ENCODE measurements at regions of chr2 and their contacts with region 1.

Region 1: GRCh38 chr2:168336864-168337263 is 89.5 kb upstream of the STK39 start:
- DNase-seq: peak; percentile 77
- ATAC-seq: peak; percentile 98
- H3K4me3 Mint-ChIP-seq: no peak overlapping the region
- H3K27ac Mint-ChIP-seq: no peak overlapping the region
- H3K4me1 Mint-ChIP-seq: peaks cover 7% of the 10 kb centered on the region
- H3K27me3 Mint-ChIP-seq: peaks cover 2% of the 10 kb centered on the region

Region 2: DNA sequence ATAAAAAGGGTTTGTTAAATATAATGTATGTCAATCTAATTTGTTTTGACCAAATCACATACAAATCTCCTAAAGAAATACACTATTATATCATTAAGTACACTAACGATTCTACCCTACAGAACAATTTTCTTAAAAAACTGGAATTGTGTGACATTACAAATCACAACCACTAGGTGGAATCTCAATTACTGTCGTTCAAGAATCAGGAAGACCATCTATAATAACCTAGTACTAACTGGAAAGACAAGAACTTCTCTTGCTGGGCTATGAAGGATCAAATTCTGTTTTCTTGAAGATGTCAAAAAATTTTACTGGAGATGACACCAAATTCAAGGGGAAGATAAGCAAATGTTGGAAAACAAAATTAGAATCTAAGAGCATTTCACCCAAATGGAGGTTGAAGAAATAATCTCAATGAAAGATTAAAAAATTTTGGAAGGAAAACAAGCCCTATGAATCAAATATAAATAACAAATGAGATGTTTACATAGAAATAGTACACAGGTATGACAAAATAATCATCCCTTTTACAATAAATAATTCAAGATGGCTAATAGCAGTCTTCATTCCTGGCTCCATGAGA is 200.4 kb before region 1 on chr2:
- CTCF ChIA-PET with region 1: interaction called, 5 read pairs
- POLR2A ChIA-PET with region 1: no interaction called
- intact Hi-C with region 1: loop called (anchors 1 to 2 kb)
- DNase-seq: no peak
- ATAC-seq: peak; percentile 26
- H3K4me3 Mint-ChIP-seq: no peak overlapping the region
- H3K27ac Mint-ChIP-seq: no peak overlapping the region
- H3K4me1 Mint-ChIP-seq: peaks cover 20% of the 10 kb centered on the region
- H3K27me3 Mint-ChIP-seq: no peaks in the 10 kb centered on the region

Region 3: DNA sequence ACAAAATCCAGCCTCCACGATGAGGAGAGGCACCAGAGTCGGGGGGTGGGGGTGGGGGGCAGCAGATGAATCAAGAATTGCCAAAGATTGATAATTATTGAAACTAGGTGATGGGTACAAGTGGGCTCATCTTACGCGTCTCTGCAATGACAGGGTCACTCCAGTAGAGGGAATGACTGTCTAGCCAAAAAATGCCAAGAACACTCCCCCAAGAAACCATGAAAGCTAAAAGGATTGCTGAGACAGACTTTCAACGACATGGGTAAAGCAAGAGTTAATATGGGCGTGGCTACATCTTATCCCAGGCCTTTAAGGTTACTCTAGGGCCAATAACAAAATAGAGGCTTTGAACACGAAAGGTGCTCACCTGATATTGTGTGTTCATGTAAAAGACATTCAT is 176.0 kb before region 1 on chr2:
- CTCF ChIA-PET with region 1: interaction called, 4 read pairs
- POLR2A ChIA-PET with region 1: interaction called, 3 read pairs
- intact Hi-C with region 1: loop called (anchors 1 to 10 kb)
- DNase-seq: no peak
- ATAC-seq: peak; percentile 38
- H3K4me3 Mint-ChIP-seq: no peak overlapping the region
- H3K27ac Mint-ChIP-seq: no peak overlapping the region
- H3K4me1 Mint-ChIP-seq: peaks cover 31% of the 10 kb centered on the region
- H3K27me3 Mint-ChIP-seq: no peaks in the 10 kb centered on the region

Region 4: DNA sequence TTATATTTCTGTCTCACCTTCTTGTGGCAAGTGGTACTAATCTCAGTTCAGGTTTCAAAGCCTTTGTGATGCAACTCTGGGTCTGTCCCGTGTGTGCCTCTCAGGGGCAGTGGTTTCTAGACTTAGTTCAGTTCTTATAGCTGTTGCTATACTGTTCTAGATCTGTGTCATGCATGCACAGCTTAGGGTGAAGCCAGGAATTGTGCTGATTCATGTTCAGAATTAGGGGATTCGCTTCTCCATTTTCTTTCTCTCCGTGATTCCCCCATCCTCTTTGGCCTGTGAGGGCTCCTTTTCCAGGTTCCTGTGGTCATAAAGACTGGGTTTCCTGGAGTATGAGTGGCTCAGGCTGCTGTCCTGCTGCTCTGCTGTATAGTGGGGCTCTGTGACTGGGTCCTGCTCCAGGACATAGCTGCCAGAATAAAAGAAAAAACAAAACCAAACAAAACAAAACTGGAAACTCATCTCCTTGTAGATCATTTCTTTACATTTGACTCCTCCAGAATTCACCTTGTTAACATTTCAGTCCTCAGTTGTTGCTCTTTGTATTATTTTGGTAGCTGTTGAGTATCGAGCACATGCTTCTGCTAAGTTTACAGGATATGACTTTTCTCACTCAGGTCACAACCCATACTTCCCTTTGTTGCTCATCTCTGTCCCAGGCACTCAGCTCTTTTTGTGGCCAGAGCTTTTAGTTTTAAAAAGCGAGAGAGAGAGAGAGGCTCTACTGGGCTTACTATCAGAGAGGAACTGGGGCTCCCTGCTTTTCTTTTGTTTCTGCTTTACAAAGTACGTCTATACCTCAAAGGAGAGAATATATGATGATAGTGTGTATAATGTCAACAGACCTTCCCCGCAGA is 153.4 kb after region 1 on chr2:
- CTCF ChIA-PET with region 1: no interaction called
- POLR2A ChIA-PET with region 1: no interaction called
- intact Hi-C with region 1: no loop called
- DNase-seq: peak; percentile 78
- ATAC-seq: peak; percentile 92
- H3K4me3 Mint-ChIP-seq: peak overlapping the region; percentile 61
- H3K27ac Mint-ChIP-seq: peak overlapping the region; percentile 88
- H3K4me1 Mint-ChIP-seq: peaks cover 50% of the 10 kb centered on the region
- H3K27me3 Mint-ChIP-seq: peaks cover 7% of the 10 kb centered on the region

Region 5: DNA sequence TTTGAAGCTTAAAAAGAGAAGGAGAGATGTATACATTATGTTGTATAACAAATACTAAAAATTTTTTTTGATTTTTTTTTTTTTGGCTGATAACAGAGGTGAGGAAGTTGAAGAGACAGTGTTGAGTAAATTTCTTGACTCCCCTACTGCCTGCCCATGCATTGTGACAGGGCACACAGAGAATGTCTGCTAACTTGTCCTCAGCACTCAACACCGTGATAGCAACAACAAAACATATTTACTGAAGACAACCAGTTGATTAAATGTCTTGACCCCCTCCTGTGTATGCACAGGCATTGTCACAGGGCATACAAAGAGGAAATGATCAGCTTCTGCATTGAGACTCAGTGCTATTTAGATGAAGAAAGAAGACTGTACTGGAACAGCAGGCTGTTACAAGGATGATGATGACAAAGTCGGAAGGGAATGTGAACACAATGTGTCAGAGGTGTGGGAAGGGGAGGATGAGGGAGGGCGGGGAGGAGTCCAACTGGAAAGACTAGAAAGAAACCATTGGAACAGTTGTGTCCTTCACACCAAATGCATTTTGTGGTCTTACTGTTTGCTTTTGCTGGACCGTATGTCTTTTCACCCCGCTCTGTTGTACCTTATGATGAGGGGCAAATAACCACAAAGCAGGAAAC is 208.7 kb after region 1 on chr2:
- CTCF ChIA-PET with region 1: no interaction called
- POLR2A ChIA-PET with region 1: no interaction called
- intact Hi-C with region 1: no loop called
- DNase-seq: no peak
- ATAC-seq: no peak
- H3K4me3 Mint-ChIP-seq: no peak overlapping the region
- H3K27ac Mint-ChIP-seq: no peak overlapping the region
- H3K4me1 Mint-ChIP-seq: peaks cover 39% of the 10 kb centered on the region
- H3K27me3 Mint-ChIP-seq: no peaks in the 10 kb centered on the region